Activated CD4-positive, alpha-beta T cell treated with anti-CD3 and anti-CD28 coated beads, Interleukin-2, amount 10 ng/mL, durations not matched to agents 24 days and 14 days (primary cell): ENCODE measurements at regions of chr5 and their contacts with region 1.

Region 1: DNA sequence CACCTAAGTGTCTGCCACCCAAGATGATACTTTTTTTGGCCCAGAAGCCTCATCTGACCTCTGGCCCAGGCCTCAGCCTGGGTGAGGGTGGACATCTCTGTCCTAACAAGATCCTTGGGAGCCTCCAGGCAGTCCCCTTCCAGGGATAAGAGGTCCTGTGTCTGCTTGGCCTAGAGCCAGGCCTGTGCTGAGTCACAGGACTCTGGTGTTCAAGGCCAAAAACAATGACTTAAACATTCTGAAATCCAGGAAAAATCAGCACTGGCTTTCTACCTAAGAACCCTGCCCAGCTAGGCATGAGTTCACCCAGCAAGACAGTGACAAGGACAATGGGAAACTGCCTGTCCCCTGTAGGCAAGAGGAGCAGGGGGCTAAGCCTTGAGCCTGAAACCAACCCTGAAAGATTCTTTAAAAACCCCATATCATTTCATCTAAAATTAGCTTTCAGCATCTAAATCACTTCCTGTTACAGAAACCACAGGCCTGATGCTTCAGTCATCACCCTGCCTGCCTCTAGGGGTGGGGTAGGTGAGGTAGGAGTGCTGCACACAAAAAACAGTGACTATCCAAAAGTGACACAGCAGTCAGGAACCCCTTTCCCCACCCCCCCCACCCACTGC is 29.9 kb downstream of the CSF2 start:
- DNase-seq: peak; percentile 92
- H3K4me3 Mint-ChIP-seq: peak overlapping the region; percentile 55
- H3K27ac Mint-ChIP-seq: peak overlapping the region; percentile 98
- H3K4me1 Mint-ChIP-seq: peaks cover 72% of the 10 kb centered on the region
- H3K27me3 Mint-ChIP-seq: no peaks in the 10 kb centered on the region

Region 2: GRCh38 chr5:131536211-131536826 is 567.1 kb before region 1 on chr5:
- intact Hi-C with region 1: loop called (anchors 5 kb)
- DNase-seq: peak; percentile 72
- H3K4me3 Mint-ChIP-seq: peak overlapping the region; percentile 65
- H3K27ac Mint-ChIP-seq: peak overlapping the region; percentile 79
- H3K4me1 Mint-ChIP-seq: peaks cover 61% of the 10 kb centered on the region
- H3K27me3 Mint-ChIP-seq: no peaks in the 10 kb centered on the region

Region 3: DNA sequence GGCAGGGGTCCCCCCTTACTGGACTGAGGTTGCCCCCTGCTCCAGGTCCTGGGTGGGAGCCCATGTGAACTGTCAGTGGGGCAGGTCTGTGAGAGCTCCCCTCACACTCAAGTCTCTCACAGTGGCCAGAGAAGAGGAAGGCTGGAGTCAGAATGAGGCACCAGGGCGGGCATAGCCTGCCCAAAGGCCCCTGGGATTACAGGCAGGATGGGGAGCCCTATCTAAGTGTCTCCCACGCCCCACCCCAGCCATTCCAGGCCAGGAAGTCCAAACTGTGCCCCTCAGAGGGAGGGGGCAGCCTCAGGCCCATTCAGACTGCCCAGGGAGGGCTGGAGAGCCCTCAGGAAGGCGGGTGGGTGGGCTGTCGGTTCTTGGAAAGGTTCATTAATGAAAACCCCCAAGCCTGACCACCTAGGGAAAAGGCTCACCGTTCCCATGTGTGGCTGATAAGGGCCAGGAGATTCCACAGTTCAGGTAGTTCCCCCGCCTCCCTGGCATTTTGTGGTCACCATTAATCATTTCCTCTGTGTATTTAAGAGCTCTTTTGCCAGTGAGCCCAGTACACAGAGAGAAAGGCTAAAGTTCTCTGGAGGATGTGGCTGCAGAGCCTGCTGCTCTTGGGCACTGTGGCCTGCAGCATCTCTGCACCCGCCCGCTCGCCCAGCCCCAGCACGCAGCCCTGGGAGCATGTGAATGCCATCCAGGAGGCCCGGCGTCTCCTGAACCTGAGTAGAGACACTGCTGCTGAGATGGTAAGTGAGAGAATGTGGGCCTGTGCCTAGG is 30.0 kb before region 1 on chr5 and contains the start of gene CSF2:
- intact Hi-C with region 1: loop called (anchors 1 kb)
- DNase-seq: no peak
- H3K4me3 Mint-ChIP-seq: peak within 1 kb of the TSS; percentile 80
- H3K27ac Mint-ChIP-seq: peak within 1 kb of the TSS; percentile 92
- H3K4me1 Mint-ChIP-seq: peaks cover 81% of the 10 kb centered on the region
- H3K27me3 Mint-ChIP-seq: no peaks in the 10 kb centered on the region
- total RNA-seq, gene CSF2: 1,084 and 1,122 TPM in 2 replicates

Region 4: GRCh38 chr5:132114150-132115121 is 11.0 kb after region 1 on chr5:
- intact Hi-C with region 1: loop called (anchors 1 kb)
- DNase-seq: peak; percentile 58
- H3K4me3 Mint-ChIP-seq: peak overlapping the region; percentile 32
- H3K27ac Mint-ChIP-seq: peak overlapping the region; percentile 63
- H3K4me1 Mint-ChIP-seq: peaks cover 56% of the 10 kb centered on the region
- H3K27me3 Mint-ChIP-seq: no peaks in the 10 kb centered on the region

Region 5: GRCh38 chr5:132176987-132177386 is 73.5 kb after region 1 on chr5:
- intact Hi-C with region 1: loop called (anchors 1 kb)
- DNase-seq: no peak
- H3K4me3 Mint-ChIP-seq: peak overlapping the region; percentile 71
- H3K27ac Mint-ChIP-seq: peak overlapping the region; percentile 80
- H3K4me1 Mint-ChIP-seq: peaks cover 33% of the 10 kb centered on the region
- H3K27me3 Mint-ChIP-seq: peaks cover 8% of the 10 kb centered on the region